ENCODE measurements at regions of chr10 and their contacts with region 1.

Region 1: DNA sequence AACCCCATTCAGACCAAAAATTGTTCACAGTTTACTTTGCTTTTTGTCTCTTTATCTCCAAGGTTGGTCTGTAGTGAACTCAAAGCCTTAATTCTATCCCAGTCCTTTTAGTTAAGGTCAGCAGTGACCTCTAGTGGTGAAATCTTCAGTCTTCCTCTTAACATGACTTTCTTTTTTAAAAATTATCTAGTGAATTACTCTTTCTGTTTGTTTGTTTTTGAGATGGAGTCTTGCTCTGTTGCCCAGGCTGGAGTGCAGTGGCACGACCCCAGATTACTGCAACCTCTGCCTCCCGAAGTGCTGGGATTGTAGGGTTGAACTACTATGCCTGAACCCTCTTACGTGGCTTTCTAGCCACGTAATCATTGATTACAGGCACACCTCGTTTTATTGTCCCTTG is 25.0 kb downstream of the ZNF487 start:
- DNase-seq: peak; percentile 95
- ATAC-seq: peak; percentile 95
- H3K4me3 ChIP-seq: no peak overlapping the region
- H3K27ac ChIP-seq: no peak overlapping the region
- H3K4me1 ChIP-seq: no peaks in the 10 kb centered on the region
- H3K27me3 ChIP-seq: no peaks in the 10 kb centered on the region
- CTCF ChIP-seq: peak; percentile 88

Region 2: DNA sequence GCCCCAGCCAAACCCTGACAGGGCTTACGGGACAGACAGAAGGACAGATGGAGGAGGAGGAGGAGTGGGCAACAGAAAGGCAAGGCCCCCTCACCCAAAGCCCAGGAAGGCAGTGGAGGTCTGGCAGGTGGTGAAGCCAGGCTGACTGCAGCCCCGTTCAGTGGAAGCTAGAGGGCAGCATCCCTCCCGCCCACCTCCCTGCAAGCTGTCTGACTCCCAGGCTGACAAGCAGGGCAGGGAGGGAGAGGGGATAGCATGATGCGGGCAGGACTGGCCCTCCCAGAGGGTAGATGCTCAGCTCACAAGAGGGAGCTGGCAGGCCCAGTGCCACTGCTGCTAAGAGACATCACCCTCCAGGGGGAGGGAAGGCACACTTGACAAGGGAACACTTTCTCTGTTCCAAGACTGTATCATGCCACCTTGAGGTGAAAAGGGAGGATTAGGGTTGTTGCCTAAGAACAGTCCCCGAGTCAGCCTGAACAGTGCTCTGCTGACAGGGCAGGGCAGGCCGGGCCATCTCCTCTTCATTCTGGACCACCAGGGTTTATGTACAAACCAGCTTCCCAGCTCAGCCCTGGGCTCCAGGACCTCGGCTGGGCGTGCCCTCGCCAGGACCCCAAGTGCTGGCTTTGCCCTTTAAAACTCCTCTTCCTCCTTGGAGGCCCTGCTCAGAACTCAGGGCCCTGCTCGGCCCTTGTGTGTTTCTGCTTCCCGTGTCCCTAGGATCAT is 256.8 kb before region 1 on chr10:
- CTCF ChIA-PET with region 1: interaction called, 9 read pairs
- POLR2A ChIA-PET with region 1: no interaction called
- intact Hi-C with region 1: loop called (anchors 1 kb)
- DNase-seq: peak; percentile 70
- ATAC-seq: peak; percentile 89
- H3K4me3 ChIP-seq: no peak overlapping the region
- H3K27ac ChIP-seq: no peak overlapping the region
- H3K4me1 ChIP-seq: no peaks in the 10 kb centered on the region
- H3K27me3 ChIP-seq: no peaks in the 10 kb centered on the region
- CTCF ChIP-seq: peak; percentile 98

Region 3: DNA sequence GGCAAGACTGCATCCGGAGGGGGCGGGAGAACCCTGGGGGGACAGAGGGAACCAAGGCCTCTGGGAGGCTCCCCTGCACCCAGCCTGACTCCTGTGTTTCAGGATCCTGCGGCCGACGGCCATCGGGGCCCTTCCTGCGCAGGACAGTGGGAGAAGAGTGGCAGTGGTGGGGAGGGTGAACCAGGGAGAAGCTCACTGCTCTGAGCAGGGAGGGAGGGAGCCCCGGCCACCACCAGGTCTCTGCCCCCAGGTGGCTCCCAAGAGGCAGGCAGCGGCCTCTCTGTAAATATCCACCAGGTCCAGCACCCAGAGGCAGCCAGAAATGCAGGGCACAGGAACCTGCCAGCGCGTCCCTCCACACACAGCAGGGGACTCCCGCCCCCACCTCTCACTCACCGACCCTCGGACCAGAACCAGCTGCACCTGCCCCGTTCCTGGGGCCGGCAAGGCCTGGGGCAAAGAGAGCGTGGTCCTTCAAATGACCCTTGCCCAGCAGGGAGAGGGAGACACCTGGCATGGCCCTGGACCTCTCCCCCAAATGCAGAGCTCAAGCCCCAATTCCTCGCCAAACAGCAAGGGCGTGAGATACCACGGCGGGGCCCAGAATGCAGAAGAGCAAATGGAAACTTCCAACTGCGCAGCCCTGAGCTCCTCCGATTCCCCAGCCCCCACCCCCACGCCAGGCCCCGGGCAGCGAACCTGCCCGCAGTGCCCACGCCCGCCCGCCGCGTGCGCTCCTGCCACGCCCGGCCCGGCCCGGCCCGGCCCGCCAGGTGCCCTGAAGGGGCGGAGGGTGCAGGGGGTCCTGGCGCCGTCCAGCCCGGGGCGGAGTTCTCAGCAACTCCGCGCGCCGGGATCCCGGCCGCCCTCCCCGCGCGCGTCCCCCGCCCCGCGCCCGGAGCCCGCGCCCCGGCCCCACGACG is 195.9 kb before region 1 on chr10:
- CTCF ChIA-PET with region 1: no interaction called
- POLR2A ChIA-PET with region 1: no interaction called
- intact Hi-C with region 1: loop called (anchors 1 kb)
- DNase-seq: peak; percentile 57
- ATAC-seq: peak; percentile 88
- H3K4me3 ChIP-seq: 0 out of 2 replicates have a peak overlapping the region, but pooled peaks have one; percentile 9
- H3K27ac ChIP-seq: no peak overlapping the region
- H3K4me1 ChIP-seq: no peaks in the 10 kb centered on the region
- H3K27me3 ChIP-seq: peaks cover 64% of the 10 kb centered on the region
- CTCF ChIP-seq: peak; percentile 60

Region 4: DNA sequence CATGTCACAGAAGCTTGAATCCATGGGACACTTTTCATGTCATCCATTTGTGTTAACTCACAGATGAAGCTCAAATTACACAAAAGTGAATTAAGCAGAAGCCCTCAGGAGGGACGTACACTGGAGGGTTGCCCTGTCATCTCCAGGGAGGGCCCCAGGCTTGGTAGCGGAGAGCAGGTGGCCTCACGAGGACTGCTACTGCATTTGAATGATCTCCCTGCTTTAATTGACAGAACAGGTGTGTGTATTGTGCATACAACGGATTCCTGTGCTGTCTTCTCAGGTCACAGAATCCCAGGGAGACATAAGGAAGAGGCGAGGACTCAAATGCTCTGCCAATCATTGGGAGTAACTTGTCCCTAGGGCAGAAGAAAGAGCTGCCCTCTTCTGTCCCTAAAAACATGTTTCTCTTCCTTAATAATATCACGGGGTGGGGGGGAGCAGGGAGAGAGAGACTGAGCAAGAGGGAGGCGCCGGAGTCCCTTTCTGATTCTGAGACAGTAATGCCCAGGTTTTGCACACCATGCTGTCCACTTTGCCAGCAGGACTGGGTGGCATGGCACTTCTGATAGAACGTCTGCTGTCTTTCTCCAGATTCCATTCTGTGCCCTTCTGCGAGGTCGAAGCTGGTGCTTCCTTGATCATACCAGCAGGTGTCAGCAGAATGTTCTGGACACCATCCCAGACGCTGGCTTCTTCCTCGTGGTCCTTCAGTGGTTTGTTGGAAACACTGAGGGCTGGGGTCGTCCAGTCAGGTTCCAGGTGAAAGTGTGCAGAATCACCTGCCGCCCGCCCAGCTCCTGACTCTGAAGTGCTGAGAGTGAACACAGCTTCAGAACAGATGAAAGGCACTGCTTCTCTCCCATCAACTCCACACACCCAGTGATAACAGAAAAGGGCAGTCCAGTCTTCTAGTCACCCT is 168.9 kb before region 1 on chr10:
- CTCF ChIA-PET with region 1: interaction called, 16 read pairs
- POLR2A ChIA-PET with region 1: no interaction called
- intact Hi-C with region 1: loop called (anchors 1 kb)
- DNase-seq: peak; percentile 78
- ATAC-seq: peak; percentile 92
- H3K4me3 ChIP-seq: no peak overlapping the region
- H3K27ac ChIP-seq: no peak overlapping the region
- H3K4me1 ChIP-seq: peaks cover 10% of the 10 kb centered on the region
- H3K27me3 ChIP-seq: peaks cover 8% of the 10 kb centered on the region
- CTCF ChIP-seq: peak; percentile 93

Region 5: GRCh38 chr10:43348511-43349312 is 113.2 kb before region 1 on chr10:
- CTCF ChIA-PET with region 1: no interaction called
- POLR2A ChIA-PET with region 1: no interaction called
- intact Hi-C with region 1: loop called (anchors 2 kb)
- DNase-seq: peak; percentile 91
- ATAC-seq: peak; percentile 99
- H3K4me3 ChIP-seq: no peak overlapping the region
- H3K27ac ChIP-seq: no peak overlapping the region
- H3K4me1 ChIP-seq: peaks cover 28% of the 10 kb centered on the region
- H3K27me3 ChIP-seq: no peaks in the 10 kb centered on the region
- CTCF ChIP-seq: peak; percentile 99

Region 6: GRCh38 chr10:43390759-43391158 is 71.2 kb before region 1 on chr10:
- CTCF ChIA-PET with region 1: no interaction called
- POLR2A ChIA-PET with region 1: no interaction called
- intact Hi-C with region 1: loop called (anchors 1 kb)
- DNase-seq: peak; percentile 61
- ATAC-seq: peak; percentile 83
- H3K4me3 ChIP-seq: no peak overlapping the region
- H3K27ac ChIP-seq: no peak overlapping the region
- H3K4me1 ChIP-seq: peaks cover 13% of the 10 kb centered on the region
- H3K27me3 ChIP-seq: no peaks in the 10 kb centered on the region
- CTCF ChIP-seq: peak; percentile 71

Measured in PC-3 (cell line).